ENCODE measurements at regions of chr9 and their contacts with region 1.

Region 1: DNA sequence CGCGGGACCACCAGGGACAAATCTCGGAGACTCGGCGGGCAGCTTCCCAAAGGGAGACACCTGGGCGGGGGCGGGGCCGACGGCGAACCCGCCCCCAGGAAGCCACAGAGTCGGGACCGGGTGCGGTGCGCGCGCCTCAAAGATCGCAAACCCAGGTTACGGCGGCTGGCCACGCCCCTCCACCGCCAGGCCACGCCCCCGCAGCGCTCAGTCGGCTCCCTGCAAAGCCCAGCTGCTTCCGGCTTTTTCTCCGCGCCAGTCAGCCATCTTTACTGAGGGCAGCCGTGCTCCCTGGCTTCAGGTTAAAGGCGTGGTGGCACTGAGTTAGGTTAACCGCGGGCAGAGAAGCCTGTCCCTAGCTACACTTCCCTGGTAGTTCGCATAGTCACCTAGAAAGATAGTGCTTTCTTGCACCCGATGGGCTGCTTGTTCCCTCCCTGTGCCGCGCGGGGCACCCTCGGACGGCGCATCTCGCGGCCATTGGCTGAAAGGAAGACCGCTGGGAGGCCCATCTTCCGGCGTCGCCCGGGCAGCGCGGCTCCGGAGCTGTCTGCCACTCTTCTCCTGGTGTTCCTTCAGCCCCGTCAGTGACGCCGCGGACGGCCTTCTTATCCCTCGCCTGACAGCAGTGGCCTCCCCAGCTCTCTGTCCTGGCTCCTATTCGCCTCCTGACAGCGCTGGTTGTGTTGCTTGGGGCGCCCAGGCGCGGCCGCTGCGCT is at the start of gene TBC1D2:
- DNase-seq: peak; percentile 99
- H3K4me3 ChIP-seq: peak within 1 kb of the TSS; percentile 63 to 98 (median 78)
- H3K27ac ChIP-seq: peak within 1 kb of the TSS; percentile 97 to 99 (median 98)
- H3K4me1 ChIP-seq: peaks cover 8 to 37% (median 13%) of the 10 kb centered on the region in 4 donors
- H3K27me3 ChIP-seq: no peaks in the 10 kb centered on the region
- CTCF ChIP-seq: peak in 3 of 5 experiments; percentile 7 to 28 (median 10)
- EP300 ChIP-seq: no peak
- POLR2A ChIP-seq: peak; percentile 71
- total RNA-seq, gene TBC1D2: 37.7 to 109 (median 55.8) TPM

Region 2: DNA sequence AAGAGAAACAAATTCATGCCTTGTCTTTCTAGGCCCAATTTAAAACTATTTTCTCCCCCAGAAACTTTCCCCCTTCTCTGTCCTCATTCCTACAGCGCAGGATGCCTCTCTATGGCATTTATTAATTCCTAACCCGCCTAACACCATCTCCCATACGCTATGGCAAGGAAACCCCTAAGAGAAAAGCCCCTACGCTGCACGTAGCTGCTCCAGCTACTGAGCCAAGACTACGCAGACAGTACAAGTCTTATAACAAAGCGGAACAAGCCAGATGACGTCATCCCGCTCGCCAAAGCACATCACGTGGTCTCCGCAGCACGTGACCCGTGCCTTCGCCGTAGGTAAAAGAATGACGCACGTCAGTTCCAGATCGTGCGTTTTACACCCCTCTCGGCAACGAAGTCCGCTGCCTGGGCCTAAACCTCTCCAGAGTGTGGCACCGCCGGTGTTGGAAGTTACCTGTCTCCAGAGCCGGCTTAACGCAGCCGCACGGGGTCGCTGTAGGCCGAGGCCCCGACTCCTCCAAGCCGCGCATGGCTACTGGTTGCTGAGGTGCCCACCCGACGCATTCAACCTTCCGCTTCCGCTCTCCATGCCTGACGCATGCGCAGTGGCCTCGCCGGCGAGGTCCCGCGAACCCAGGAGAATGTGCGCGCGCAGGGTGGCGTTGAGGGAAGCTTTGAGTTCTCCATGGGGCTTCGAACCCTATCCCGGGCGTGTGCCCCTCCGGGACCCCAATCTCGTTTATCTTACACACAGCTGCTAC is 333.6 kb before region 1 on chr9 and contains the start of gene TRMO:
- in situ Hi-C with region 1: loop called in 2 of 4 experiments (anchors 25 kb)
- intact Hi-C with region 1: no loop called
- DNase-seq: peak; percentile 98
- H3K4me3 ChIP-seq: peak within 1 kb of the TSS; percentile 49 to 62 (median 52)
- H3K27ac ChIP-seq: peak within 1 kb of the TSS; percentile 94 to 98 (median 96)
- H3K4me1 ChIP-seq: peaks cover 0 to 35% (median 12%) of the 10 kb centered on the region in 4 donors
- H3K27me3 ChIP-seq: peaks cover 15% of the 10 kb centered on the region
- CTCF ChIP-seq: peak; percentile 35 to 68 (median 47)
- EP300 ChIP-seq: peak; percentile 56
- POLR2A ChIP-seq: peak; percentile 96
- total RNA-seq, gene TRMO: 25.6 to 37.8 (median 31.1) TPM

Region 3: GRCh38 chr9:98022447-98022846 is 233.3 kb before region 1 on chr9:
- in situ Hi-C with region 1: no loop called
- intact Hi-C with region 1: no loop called
- DNase-seq: no peak
- H3K4me3 ChIP-seq: no peak overlapping the region
- H3K27ac ChIP-seq: no peak overlapping the region
- H3K4me1 ChIP-seq: peaks cover 0 to 9% (median 7%) of the 10 kb centered on the region in 4 donors
- H3K27me3 ChIP-seq: no peaks in the 10 kb centered on the region
- CTCF ChIP-seq: no peak
- EP300 ChIP-seq: no peak
- POLR2A ChIP-seq: no peak

Region 4: GRCh38 chr9:98074115-98074990 is 181.4 kb before region 1 on chr9:
- in situ Hi-C with region 1: loop called in 3 of 4 experiments (anchors 10 to 25 kb)
- intact Hi-C with region 1: no loop called
- DNase-seq: peak; percentile 82
- H3K4me3 ChIP-seq: peak overlapping the region in 1 of 4 donors; percentile 22
- H3K27ac ChIP-seq: peak overlapping the region; percentile 87 to 94 (median 88)
- H3K4me1 ChIP-seq: peaks cover 17 to 58% (median 33%) of the 10 kb centered on the region in 4 donors
- H3K27me3 ChIP-seq: no peaks in the 10 kb centered on the region
- CTCF ChIP-seq: peak; percentile 92 to 98 (median 97)
- EP300 ChIP-seq: no peak
- POLR2A ChIP-seq: no peak

Region 5: DNA sequence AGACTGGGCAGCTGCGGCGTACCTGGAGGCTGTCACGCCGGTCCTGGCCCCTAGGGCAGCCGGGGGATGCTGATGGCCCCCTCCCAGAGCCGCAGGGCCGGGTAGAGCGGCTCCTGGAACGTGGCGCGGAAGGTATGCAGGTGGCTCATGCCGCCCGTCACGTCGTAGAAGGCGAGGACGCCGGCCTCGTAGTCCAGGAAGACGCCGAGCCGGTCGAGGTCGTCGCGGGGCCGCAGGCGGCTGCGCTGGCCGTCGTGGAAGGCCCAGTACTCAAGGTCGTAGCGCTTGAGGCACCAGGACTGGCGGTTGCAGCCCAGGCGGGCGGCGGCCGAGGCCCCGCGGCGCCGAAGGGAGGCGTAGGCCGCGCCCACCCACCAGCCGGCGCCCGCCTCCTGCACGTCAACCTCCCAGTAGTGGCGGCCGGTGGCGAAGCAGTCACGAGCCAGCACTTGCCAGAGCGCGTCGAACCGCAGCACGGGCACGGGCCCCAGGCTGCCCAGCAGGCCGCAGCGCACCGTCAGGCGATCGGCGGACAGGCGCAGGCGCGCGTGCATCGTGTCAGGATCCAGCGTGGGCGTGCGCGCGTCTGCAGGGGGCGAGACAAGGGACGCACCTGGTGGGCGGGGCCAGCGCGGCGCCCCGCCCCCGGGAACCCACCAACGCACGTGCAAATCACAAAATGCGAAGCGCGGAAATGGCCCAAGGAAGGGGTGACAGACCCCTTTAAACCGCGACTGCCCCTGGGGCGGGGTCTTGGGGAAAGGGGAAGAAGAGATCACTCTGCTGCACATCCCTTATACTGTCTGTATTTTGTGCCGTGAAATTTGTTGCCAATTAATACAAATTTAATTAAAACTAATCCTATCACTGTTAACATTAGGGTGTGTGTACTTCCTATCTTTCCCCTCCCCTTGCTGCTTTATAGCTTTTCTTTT is 168.1 kb before region 1 on chr9:
- in situ Hi-C with region 1: loop called in 1 of 4 experiments (anchors 25 kb)
- intact Hi-C with region 1: no loop called
- DNase-seq: peak; percentile 22
- H3K4me3 ChIP-seq: peak overlapping the region in 2 of 4 donors; percentile 8 to 30
- H3K27ac ChIP-seq: no peak overlapping the region
- H3K4me1 ChIP-seq: peaks cover 0 to 20% (median 2%) of the 10 kb centered on the region in 4 donors
- H3K27me3 ChIP-seq: no peaks in the 10 kb centered on the region
- CTCF ChIP-seq: peak in 2 of 5 experiments; percentile 9 to 11
- EP300 ChIP-seq: no peak
- POLR2A ChIP-seq: no peak

Region 6: DNA sequence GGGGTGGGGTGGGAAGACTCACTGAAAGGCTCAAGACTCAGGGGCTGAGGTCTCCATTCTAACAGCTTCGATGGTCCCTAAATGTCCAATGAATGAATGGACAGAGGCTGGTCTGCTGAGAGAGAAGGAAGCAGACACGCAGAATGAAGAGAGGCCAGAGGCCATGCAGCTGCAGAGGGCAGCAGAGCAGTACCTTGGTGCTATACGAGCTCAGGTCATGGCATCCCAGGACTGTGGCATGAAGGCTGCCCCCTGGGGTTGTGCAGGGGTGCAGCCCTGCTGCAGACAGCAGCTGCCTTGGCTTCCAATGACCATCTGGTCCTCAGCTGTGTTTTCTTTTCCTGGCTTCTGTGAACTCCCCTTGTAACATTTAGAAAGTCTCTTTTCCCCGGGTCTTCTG is 48.1 kb before region 1 on chr9:
- in situ Hi-C with region 1: loop called (anchors 5 to 10 kb)
- intact Hi-C with region 1: loop called (anchors 5 kb)
- DNase-seq: no peak
- H3K4me3 ChIP-seq: no peak overlapping the region
- H3K27ac ChIP-seq: no peak overlapping the region
- H3K4me1 ChIP-seq: peaks cover 0 to 14% (median 4%) of the 10 kb centered on the region in 4 donors
- H3K27me3 ChIP-seq: no peaks in the 10 kb centered on the region
- CTCF ChIP-seq: no peak
- EP300 ChIP-seq: no peak
- POLR2A ChIP-seq: no peak